Panc1 (cell line): ENCODE measurements at regions of chr3 and their contacts with region 1.

Region 1: DNA sequence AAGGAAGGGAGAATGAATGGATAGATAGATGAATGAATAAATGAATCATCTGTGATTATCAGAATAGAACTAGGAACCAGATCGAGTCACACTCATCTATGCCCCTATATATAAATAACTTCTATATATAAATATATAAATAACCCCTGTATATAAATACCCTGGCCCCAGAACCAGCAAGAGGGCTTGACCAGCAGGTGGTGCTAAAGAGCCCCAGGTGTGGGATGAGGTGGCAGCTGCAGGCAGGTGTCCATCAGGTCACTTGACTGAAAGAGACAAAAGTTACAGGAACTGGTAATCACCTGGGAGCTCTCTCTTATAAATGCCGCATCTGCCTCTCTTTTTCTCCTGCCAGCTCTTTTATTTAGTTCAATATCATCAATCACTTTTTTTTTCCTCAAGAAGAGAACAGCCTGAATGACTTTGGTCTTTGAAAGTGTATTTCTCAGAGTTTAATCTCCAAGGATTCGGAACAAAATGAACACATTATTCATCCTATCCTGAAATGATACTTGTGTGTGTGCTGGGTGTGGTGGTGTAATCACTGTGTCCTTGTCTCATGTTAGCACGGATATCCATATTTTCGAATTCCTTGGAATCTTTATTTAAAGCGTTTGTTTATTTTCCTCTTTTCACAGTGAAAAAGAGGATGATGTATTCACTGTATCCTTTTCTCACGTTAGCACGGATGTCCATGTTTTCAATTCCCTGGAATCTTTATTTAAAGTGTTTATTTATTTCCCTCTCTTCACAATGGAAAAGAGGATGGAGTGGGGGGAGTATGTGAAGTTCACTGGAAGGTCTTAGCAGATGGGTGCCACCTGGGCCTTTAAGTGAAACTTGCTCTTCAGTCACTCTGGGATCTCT is 35.4 kb upstream of the ATG7 start:
- DNase-seq: peak; percentile 53
- ATAC-seq: peak; percentile 54; the same call in 1 of the 2 replicates
- H3K4me3 ChIP-seq: no peak overlapping the region
- H3K27ac ChIP-seq: peak overlapping the region; percentile 77
- H3K4me1 ChIP-seq: peaks cover 13% of the 10 kb centered on the region
- H3K27me3 ChIP-seq: no peaks in the 10 kb centered on the region
- CTCF ChIP-seq: peak; percentile 89

Region 2: DNA sequence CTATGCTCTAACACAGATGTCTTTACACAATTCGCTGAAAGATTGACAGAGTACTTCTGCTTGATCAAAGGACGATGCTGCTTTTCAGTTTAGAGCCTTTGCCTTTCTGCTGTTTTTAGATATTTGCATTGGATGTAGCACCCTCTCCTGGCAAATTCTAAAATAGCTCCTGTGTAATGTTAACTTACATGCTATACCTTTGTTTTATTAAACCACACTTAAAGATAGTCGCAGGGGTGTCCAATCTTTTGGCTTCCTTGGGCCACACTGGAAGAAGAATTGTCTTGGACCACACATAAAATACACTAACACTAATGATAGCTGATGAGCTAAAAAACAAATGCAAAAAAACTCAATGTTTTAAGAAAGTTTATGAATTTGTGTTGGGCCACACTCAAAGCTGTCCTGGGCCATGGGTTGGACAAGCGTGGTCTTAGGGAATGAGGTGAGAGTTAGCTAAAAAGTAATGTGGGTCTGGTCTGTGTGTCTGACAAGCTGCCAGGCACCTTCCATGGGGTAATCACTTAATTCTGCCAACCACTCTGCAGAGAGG is 98.3 kb after region 1 on chr3:
- CTCF ChIA-PET with region 1: interaction called, 8 read pairs
- POLR2A ChIA-PET with region 1: interaction called, 17 read pairs
- in situ Hi-C with region 1: no loop called
- intact Hi-C with region 1: loop called (anchors 5 kb)
- DNase-seq: peak; percentile 39
- ATAC-seq: peak; percentile 80
- H3K4me3 ChIP-seq: no peak overlapping the region
- H3K27ac ChIP-seq: no peak overlapping the region
- H3K4me1 ChIP-seq: no peaks in the 10 kb centered on the region
- H3K27me3 ChIP-seq: no peaks in the 10 kb centered on the region
- CTCF ChIP-seq: peak; percentile 66